Activated B cell treated with CpG ODN at 0.5 μM for 24 hours (primary cell): ENCODE measurements at regions of chr15 and their contacts with region 1.

Region 1: GRCh38 chr15:98442379-98442833 is 205.9 kb upstream of the IGF1R start:
- DNase-seq: no peak
- ATAC-seq: peak; percentile 50
- H3K4me3 Mint-ChIP-seq: no peak overlapping the region
- H3K27ac Mint-ChIP-seq: no peak overlapping the region
- H3K4me1 Mint-ChIP-seq: peaks cover 5% of the 10 kb centered on the region
- H3K27me3 Mint-ChIP-seq: peaks cover 2% of the 10 kb centered on the region
- CTCF ChIP-seq: peak; percentile 44

Region 2: DNA sequence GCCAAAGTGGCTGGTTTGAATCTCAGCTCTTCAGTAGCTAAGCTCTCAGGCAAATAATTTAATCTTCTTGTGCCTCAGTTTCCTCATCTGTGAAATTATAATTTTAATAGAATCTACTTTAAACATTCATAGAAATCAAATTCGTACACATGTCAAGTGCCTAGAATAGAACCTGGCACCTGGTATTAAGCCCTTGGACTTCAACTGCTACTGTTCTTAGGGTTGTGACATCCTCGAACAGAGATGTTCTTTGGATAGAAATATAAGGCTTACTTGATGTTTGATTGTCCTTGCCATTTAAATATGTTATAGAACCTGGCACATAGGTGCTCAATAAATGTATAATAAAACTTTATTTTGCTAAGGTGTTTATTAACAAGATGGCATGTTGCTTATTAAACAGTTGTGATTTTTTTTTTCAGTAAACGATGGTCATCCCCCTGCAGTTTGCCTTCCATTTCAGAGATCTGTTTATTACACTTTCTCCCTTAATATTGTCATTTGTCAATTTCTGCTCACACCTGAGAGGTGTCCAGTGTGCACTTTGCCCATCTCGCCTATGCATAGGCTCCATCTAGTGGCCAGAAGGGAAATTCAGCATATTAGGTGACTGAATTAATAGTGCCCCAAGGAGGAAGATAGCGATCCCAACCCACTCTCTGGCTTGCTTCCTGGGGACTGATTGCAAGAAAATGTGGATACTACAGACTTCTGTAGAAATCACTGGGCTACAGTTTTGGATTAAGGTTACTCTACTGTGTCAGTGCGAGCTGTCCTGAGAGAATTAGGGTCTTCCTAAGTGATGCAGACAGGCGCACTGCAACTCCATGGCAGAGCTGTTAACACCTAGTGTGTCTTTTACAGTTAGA is 216.7 kb after region 1 on chr15:
- CTCF ChIA-PET with region 1: interaction called, 3 read pairs
- POLR2A ChIA-PET with region 1: no interaction called
- intact Hi-C with region 1: loop called (anchors 1 kb)
- DNase-seq: no peak
- ATAC-seq: peak; percentile 75
- H3K4me3 Mint-ChIP-seq: no peak overlapping the region
- H3K27ac Mint-ChIP-seq: no peak overlapping the region
- H3K4me1 Mint-ChIP-seq: no peaks in the 10 kb centered on the region
- H3K27me3 Mint-ChIP-seq: peaks cover 9% of the 10 kb centered on the region
- CTCF ChIP-seq: peak; percentile 54